ENCODE measurements at regions of chr13 and their contacts with region 1.

Region 1: DNA sequence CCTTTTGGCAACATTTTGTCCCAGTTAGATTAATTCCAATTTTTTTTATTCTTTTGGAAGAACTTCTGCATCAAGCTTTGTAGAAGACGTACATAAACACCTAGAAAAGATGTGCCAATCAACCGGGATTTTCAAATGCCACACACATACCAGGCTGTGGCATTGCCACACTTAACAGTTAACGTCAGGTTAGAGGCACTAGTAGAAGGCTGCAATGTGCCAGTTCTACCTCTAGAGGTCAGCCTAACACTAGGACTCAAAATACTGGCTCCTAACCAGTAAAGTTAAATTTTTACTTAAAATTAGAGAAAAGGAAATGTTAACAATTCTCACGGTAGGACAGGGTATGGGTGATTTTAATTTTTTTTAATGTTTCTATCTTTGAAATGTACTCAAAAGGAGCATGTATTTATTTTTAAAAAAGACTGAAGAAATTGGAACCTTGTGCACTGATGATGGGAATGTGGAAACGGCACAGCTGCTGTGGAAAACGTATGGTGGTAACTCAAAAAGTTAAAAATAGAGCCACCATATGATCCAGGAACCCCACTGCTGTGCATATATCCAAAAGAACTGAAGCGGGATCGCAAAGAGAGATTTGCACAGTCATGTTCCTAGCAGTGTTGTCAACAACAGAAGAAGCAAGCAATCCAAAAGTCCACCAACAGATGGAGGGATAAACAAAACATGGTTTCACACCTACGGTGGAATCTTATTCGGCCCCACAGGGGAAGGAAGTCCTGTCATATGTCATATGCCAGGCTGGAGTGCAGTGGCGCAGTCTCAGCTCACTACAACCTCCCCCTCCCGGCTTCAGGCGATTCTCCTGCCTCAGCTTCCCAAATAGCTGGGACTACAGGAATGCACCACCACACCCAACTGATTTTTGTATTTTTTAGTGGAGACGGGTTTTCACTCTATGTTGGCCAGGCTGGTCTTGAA is 30.3 kb downstream of the CRYL1 start:
- DNase-seq: peak in 1 of 2 donors; percentile 78
- H3K4me3 ChIP-seq: no peak overlapping the region
- H3K27ac ChIP-seq: no peak overlapping the region
- H3K4me1 ChIP-seq: peaks cover 0 to 8% (median 0%) of the 10 kb centered on the region in 4 donors
- H3K27me3 ChIP-seq: no peaks in the 10 kb centered on the region
- CTCF ChIP-seq: peak; percentile 90 to 95

Region 2: GRCh38 chr13:20713751-20714150 is 218.4 kb after region 1 on chr13:
- intact Hi-C with region 1: loop called (anchors 10 kb)
- DNase-seq: peak in 1 of 2 donors; percentile 70
- H3K4me3 ChIP-seq: no peak overlapping the region
- H3K27ac ChIP-seq: peak overlapping the region; percentile 68 to 72
- H3K4me1 ChIP-seq: peaks cover 0 to 46% (median 28%) of the 10 kb centered on the region in 4 donors
- H3K27me3 ChIP-seq: no peaks in the 10 kb centered on the region
- CTCF ChIP-seq: no peak

Region 3: DNA sequence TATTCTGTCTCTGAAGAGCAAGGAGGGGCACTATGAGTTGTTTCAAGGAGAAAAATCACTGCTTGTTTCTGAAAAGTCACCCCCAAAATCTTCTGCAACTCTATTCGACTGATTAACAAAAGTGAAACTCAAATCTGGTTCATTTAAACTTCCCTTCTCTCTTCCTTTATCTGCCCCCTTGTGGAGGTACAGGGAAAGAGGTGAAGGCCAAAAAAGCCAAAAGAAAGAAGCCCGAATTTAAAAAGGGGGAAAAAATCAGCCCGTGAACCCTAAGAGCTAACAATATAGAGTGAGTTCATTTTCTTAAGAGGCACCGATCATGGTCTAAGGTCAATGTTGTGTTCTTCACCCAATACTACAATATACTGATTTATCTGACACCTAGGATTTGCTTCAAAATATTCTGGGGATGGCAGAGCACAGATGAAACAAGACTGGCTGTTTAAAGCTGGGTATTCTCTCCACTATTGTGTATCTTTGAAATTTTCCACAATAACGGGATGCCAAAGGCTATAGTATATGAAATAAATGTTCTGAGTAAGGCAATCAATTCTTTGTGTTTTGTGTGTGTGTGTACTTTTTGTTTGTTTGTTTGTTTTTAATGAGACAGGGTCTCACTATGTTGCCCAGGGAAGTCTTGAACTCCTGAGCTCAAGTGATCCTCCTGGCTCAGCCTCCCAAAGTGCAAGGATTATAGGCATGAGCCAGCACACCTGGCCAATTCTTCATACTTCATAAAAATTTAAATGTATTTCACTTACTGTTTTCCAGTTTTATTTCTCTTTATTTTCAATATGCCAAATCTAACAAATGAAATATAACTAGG is 333.4 kb after region 1 on chr13:
- intact Hi-C with region 1: loop called (anchors 10 kb)
- DNase-seq: no peak
- H3K4me3 ChIP-seq: peak overlapping the region; percentile 11 to 28
- H3K27ac ChIP-seq: peak overlapping the region; percentile 5 to 29
- H3K4me1 ChIP-seq: peaks cover 0 to 31% (median 2%) of the 10 kb centered on the region in 4 donors
- H3K27me3 ChIP-seq: no peaks in the 10 kb centered on the region
- CTCF ChIP-seq: peak; percentile 73 to 83

Region 4: DNA sequence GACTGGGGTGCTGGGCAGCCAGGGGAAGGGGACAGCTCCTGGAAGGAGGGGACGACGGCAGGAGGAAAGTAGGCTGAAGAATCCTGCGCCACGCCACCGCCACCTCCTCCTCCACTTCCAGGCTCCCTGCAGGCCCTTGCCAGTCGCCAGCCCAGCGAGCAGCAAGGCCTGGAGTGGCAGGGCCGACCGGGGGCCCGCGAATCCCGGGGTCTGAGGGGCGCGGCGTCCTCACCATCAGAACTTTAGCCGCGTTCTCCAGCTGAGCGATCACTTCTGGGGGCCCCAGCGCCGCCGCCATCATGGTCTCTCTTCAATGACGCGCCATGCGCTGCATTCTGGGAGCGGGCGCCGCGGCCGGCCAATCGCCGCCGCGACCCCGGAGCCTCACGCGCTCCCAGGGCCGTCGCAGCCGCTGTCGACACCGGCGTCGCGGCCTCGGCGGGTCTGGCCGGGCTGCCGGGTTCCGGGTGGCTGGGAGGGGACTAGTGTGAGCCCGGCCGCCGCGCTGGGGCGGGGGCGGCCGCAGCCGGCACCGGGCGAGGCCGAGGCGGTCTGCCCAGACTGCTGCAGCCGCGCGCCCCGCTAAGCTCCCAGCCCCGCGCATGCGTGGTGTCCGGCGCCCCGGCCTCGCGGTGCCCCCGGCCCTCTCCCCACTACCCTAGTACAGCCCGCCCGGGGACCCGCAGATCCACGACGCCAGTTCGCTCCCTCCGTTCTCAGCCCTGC is 407.2 kb after region 1 on chr13 and contains the start of gene XPO4:
- intact Hi-C with region 1: no loop called
- DNase-seq: peak; percentile 78 to 86
- H3K4me3 ChIP-seq: peak within 1 kb of the TSS; percentile 89 to 96
- H3K27ac ChIP-seq: peak within 1 kb of the TSS; percentile 93 to 95
- H3K4me1 ChIP-seq: peaks cover 0 to 24% (median 13%) of the 10 kb centered on the region in 4 donors
- H3K27me3 ChIP-seq: no peaks in the 10 kb centered on the region
- CTCF ChIP-seq: no peak

Region 5: GRCh38 chr13:20924758-20925394 is 429.5 kb after region 1 on chr13:
- intact Hi-C with region 1: loop called (anchors 5 kb)
- DNase-seq: peak; percentile 75 to 79
- H3K4me3 ChIP-seq: no peak overlapping the region
- H3K27ac ChIP-seq: no peak overlapping the region
- H3K4me1 ChIP-seq: no peaks in the 10 kb centered on the region
- H3K27me3 ChIP-seq: no peaks in the 10 kb centered on the region
- CTCF ChIP-seq: peak; percentile 59 to 66

Measured in tibial artery (tissue), 4 donors.